ENCODE measurements at regions of chr7 and their contacts with region 1.

Region 1: GRCh38 chr7:101856473-101857357 is 39.3 kb downstream of the CUX1 start:
- DNase-seq: peak; percentile 98
- H3K4me3 ChIP-seq: peak overlapping the region; percentile 37 to 54
- H3K27ac ChIP-seq: peak overlapping the region; percentile 86 to 87
- H3K4me1 ChIP-seq: peaks cover 15 to 18% of the 10 kb centered on the region in 2 experiments
- H3K27me3 ChIP-seq: no peaks in the 10 kb centered on the region
- CTCF ChIP-seq: peak; percentile 68
- EP300 ChIP-seq: peak in 1 of 2 experiments; percentile 78; a peak in 2 of 4 replicates
- RAD21 ChIP-seq: peak; percentile 77

Region 2: DNA sequence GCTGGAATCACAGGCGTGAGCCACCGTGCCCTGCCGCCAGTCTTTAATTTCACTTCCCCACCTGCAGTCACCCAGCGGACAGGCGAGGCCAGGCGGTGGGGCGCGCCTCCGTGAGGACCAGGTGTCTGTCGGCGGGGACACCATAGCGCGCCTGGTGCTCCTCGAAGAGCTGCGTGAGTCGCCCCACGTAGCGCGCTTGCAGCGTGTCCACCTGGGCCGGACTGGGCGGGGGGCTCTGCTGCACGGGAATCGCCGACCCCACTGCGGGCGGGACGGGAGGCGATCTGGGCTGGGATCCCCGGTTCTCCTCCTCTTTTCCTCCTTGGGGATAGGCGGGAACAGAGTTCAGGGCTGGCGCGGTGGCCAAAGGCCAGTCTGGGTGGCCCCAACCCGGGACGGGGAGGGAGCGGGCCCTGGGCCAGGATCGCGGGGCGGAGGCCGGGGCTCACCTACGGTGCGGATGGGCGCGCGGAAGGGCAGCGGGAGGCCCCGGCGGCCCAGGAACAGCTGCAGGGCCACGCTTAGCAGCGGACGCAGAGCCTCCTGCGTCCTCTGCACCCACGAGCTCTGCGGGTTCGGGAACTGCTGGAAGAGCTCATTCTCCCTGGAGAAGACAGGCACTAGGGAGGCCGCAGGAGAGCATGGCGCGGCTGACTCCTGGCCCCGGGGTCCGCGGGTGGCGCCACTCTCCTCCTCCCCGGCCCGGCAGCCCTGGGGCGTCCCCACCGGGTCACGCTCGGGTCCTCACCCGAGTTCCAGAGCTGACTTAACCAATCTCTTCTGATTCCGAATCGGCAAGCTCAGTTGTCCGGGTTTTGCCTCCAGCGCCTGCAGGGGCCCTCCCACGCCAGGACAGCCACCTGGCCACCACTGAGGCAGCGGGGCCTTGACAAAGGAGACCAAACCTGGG is 654.8 kb before region 1 on chr7:
- CTCF ChIA-PET with region 1: no interaction called
- POLR2A ChIA-PET with region 1: no interaction called
- DNase-seq: peak; percentile 42
- H3K4me3 ChIP-seq: no peak overlapping the region
- H3K27ac ChIP-seq: no peak overlapping the region
- H3K4me1 ChIP-seq: no peaks in the 10 kb centered on the region
- H3K27me3 ChIP-seq: no peaks in the 10 kb centered on the region; the same call in 1 of the 2 replicates
- CTCF ChIP-seq: no peak
- EP300 ChIP-seq: no peak
- RAD21 ChIP-seq: no peak

Region 3: DNA sequence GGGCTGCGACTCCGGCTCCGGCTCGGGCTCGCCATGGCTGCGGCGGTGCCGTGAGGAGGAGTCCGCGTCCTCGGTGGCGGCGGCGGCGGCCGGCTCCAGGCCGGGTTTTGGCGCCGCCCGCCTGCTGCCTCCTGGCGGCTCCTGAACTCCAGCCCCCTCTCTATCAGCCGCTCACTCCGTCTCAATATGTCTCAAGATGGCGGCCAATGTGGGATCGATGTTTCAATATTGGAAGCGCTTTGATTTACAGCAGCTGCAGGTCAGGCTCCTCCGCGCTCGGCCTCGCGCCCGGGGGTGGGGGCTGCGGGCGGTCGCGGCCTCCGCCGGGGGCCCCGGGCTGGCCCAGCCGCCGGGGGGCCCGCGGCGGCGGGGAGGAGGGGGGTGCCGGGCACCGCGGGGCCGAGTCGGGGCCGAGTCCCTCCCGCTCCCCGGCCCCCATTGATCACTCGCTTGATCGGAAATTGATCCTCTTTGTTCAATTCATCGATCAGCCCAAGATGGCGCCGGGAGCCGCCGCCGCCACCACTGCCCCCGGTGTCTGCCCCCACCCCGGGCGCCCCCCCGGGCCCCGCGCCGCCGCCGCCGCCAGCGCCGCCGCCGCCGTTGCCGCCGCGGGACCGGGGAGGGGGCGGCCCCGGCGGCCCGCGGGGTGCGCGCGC is 40.8 kb before region 1 on chr7:
- CTCF ChIA-PET with region 1: interaction called, 12 read pairs
- POLR2A ChIA-PET with region 1: no interaction called
- DNase-seq: peak; percentile 97
- H3K4me3 ChIP-seq: peak overlapping the region; percentile 53 to 97
- H3K27ac ChIP-seq: peak overlapping the region in 1 of 2 experiments; percentile 94; a peak in 2 of 4 replicates
- H3K4me1 ChIP-seq: peaks cover 18 to 42% of the 10 kb centered on the region in 2 experiments; a peak in 3 of 4 replicates
- H3K27me3 ChIP-seq: no peaks in the 10 kb centered on the region
- CTCF ChIP-seq: no peak
- EP300 ChIP-seq: peak in 1 of 2 experiments; percentile 60; a peak in 1 of 4 replicates
- RAD21 ChIP-seq: peak; percentile 25; the same call in 1 of the 2 replicates

Region 4: DNA sequence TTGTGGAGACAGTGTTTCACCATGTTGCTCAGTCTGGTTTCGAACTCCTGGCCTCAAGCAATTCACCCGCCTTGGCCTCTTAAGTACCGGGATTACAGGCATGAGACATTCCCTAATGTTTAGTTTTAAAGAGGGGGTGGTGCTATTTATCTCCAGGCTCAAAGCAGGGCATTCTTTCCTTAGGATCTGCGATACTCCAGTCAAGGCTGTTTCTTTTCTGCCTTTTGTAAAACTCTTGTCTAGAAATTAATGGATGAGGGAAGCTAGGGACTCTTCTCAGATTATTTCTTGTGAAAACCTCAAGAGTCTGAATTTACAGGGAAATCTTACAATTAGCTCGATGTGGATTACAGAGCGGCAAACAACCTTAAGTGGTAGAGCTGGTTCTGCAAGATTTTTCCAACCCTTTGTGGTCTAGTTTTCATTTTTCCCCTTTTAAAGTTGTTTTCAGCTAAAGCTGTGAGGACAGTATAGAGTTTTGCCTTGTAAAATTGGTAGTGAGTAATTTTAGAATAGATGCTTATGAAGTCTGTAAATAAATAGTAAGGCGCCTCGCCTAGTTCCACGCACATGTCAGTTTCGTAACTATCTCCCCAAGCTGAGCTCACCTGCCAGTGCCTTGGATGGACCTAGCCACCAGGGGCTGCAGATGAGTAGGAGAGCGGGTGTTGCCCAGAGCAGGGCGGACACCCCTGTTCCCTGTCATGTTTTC is 13.8 kb after region 1 on chr7:
- CTCF ChIA-PET with region 1: interaction called, 22 read pairs
- POLR2A ChIA-PET with region 1: no interaction called
- DNase-seq: peak; percentile 54
- H3K4me3 ChIP-seq: no peak overlapping the region
- H3K27ac ChIP-seq: 0 out of 4 replicates have a peak overlapping the region, but pooled peaks of 1 of the 2 experiments have one; percentile 1
- H3K4me1 ChIP-seq: peaks cover 20 to 25% of the 10 kb centered on the region in 2 experiments; a peak in 3 of 4 replicates
- H3K27me3 ChIP-seq: no peaks in the 10 kb centered on the region
- CTCF ChIP-seq: peak; percentile 32
- EP300 ChIP-seq: no peak
- RAD21 ChIP-seq: peak; percentile 33; the same call in 1 of the 2 replicates

Region 5: DNA sequence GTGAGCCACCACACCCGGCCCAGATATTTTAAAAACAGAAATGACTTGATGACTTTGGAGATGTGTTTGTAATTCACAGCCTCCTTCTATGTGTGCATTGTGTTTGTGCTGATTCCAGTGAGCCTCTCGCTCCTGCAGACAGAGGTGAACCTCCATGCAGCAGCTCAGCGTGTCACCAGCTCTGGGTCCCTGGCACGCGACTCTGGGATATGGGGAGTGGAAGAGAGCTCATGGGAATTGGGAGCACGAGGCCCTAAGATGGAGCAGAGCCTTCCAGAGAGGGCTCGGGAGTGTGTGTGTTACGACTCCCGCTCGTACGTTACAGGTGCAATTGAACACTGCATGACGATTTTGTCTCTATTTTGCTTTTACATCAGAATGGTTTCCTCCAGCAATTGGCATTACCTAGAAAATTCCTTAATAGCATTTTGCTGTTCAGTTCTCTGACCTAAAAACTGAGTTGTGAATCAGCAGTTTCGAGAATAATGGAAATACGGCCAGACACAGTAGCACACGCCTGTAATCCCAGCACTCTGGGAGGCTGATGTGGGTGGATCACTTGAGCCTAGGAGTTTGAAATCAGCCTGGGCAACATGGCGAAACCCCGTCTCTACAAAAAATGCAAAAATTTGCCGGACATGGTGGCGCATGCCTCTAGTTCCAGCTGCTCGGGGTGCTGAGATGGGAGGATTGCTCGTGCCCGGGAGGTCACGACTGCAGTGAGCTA is 165.3 kb after region 1 on chr7:
- CTCF ChIA-PET with region 1: no interaction called
- POLR2A ChIA-PET with region 1: no interaction called
- DNase-seq: no peak
- H3K4me3 ChIP-seq: no peak overlapping the region
- H3K27ac ChIP-seq: no peak overlapping the region
- H3K4me1 ChIP-seq: peaks cover 0 to 18% of the 10 kb centered on the region in 2 experiments; a peak in 2 of 4 replicates
- H3K27me3 ChIP-seq: no peaks in the 10 kb centered on the region
- CTCF ChIP-seq: no peak
- EP300 ChIP-seq: no peak
- RAD21 ChIP-seq: no peak

Region 6: DNA sequence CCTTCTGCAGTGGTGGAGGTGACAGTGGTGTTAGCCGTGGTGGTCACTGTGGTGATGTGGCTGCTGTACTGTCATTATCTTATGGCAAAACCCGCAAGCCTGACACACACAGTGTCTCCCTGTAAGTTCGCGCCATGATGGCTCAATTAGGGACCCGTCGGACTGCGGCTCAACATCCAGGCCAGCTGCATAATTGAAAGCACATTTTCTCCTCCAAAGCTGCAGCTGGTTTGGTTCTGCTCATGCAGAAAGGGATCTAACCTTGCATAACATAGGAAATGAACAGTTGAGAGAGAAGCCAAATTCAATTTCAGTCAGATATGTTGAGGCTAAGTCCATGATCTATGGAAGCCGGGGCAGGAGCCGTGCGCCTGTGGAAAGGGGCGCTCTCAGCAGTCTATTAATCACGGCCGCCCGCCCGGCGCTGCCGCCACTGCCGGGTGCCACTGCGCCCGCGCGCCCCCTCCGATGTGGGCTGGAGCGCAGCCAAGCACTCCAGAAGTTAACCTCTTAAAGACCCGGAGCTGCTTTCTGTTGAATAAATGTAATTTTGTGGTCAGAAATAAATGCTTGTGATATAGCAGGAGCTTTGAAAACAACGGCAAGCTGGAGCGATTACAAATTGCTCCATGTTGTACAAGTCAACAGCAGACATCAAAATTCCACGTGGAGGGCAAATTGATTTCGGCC is 188.4 kb after region 1 on chr7:
- CTCF ChIA-PET with region 1: interaction called, 12 read pairs
- POLR2A ChIA-PET with region 1: no interaction called
- DNase-seq: peak; percentile 93
- H3K4me3 ChIP-seq: peak overlapping the region; percentile 23 to 36
- H3K27ac ChIP-seq: peak overlapping the region; percentile 63 to 97
- H3K4me1 ChIP-seq: peaks cover 35% of the 10 kb centered on the region in 2 experiments
- H3K27me3 ChIP-seq: no peaks in the 10 kb centered on the region
- CTCF ChIP-seq: no peak
- EP300 ChIP-seq: peak; percentile 65 to 87
- RAD21 ChIP-seq: peak; percentile 26; the same call in 1 of the 2 replicates

Region 7: GRCh38 chr7:102140952-102141370 is 284.2 kb after region 1 on chr7:
- CTCF ChIA-PET with region 1: no interaction called
- POLR2A ChIA-PET with region 1: no interaction called
- DNase-seq: no peak
- H3K4me3 ChIP-seq: no peak overlapping the region
- H3K27ac ChIP-seq: no peak overlapping the region
- H3K4me1 ChIP-seq: peaks cover 0 to under 1% of the 10 kb centered on the region in 2 experiments; a peak in 1 of 4 replicates
- H3K27me3 ChIP-seq: no peaks in the 10 kb centered on the region
- CTCF ChIP-seq: no peak
- EP300 ChIP-seq: no peak
- RAD21 ChIP-seq: no peak